T-cell (primary cell): ENCODE measurements at regions of chr3 and their contacts with region 1.

Region 1: DNA sequence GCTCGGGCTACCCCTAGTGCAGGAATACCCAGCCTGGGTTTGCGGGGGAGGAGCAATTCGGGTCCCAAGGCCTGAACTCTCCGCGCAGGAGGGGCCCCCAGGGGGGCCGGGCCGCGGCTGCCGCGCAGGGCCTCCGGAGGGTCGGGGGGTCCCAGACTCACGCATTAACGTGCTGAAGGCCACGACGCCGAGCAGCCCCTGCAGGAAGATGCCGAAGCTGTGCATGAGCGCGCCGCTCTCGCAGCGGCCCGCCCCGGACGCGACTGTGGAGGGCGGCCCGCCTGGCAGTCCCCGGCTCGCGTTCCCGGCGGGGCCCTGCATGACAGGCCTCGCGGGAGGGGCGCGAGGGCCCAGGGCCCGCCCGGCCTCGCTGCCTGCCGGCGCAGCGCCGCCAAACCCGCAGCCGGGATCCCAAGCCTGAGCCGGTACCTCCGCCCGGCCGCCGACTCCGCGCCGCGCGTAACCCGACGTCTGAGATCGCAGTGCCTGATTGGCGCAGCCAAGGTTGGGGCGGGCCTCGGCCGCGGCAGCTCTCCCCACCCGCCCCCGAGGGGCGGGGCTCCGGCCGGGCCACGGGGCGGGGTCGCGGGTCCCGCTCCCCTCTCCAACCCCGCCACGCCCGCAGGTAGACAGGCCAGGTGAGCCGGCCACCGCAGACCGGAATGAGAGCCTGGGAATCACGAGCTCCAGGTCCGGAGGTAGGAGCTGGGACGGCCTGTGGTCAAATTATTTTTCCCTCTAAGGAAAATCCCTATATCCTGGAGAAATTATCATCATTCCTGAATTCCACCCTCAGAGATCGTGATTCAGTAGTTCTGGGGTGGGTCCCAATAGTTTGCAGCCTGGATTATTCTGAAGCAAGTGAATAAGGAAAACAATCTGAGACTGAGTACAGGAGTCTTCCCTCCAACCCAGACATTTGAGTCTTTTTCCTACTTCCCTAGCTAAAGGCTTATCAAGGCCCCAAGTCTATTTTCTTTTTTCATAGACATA is at the start of gene STIMATE:
- DNase-seq: peak; percentile 71 to 93 (median 83)
- ATAC-seq: peak; percentile 95 to 97 (median 96)
- H3K4me3 ChIP-seq: peak within 1 kb of the TSS; percentile 61 to 78
- H3K4me3 Mint-ChIP-seq: peak within 1 kb of the TSS; percentile 88 to 92 (median 91)
- H3K27ac ChIP-seq: peak within 1 kb of the TSS; percentile 52
- H3K27ac Mint-ChIP-seq: peak within 1 kb of the TSS; percentile 61 to 90
- H3K4me1 ChIP-seq: peaks cover 8 to 40% of the 10 kb centered on the region in 2 experiments
- H3K4me1 Mint-ChIP-seq: peaks cover 40 to 51% (median 49%) of the 10 kb centered on the region in 3 donors
- H3K27me3 ChIP-seq: no peaks in the 10 kb centered on the region
- H3K27me3 Mint-ChIP-seq: no peaks in the 10 kb centered on the region
- total RNA-seq, gene STIMATE: 37.3 to 61.8 (median 52.9) TPM

Region 2: DNA sequence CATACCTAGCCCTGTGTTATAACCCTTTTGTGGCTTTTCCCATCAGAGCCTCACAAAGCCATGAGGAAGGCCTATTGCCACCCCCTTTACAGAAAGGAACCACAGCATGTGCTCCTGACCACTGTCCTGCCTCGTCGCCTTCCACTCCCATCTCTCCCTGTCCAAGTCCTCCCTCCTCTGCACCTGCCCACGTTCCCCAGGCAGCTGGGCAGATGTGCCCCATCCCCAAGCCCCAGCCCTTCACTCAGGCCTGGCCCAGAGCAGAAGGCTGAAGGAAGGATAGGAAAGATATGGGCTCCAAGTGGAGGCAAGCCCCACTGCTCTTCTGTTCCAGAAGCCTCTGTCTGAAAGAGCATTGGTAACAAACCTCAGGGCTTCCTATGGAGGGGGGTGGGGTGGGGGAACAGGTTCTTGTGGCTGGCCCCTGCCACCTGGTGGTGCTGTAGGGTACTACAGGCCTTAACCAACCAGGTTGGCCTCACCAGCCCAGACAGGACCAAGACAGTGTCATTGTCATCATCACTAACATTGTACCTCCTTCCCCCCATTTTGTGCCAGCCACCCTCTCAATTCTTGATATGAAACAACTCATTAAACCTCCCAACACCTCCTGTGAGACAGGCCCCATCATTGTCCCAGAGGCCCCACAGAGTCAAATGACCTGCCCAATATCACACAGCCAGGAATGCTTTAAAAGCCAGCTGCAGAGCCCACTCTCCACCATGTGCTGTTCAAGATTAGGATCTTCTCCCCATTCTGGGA is 753.2 kb before region 1 on chr3:
- CTCF ChIA-PET with region 1: no interaction called
- POLR2A ChIA-PET with region 1: interaction called in 1 of 2 experiments, 14 read pairs
- DNase-seq: peak; percentile 72 to 93 (median 86)
- ATAC-seq: peak; percentile 93 to 98 (median 96)
- H3K4me3 ChIP-seq: no peak overlapping the region
- H3K4me3 Mint-ChIP-seq: no peak overlapping the region
- H3K27ac ChIP-seq: no peak overlapping the region
- H3K27ac Mint-ChIP-seq: peak overlapping the region in 1 of 2 donors; percentile 31
- H3K4me1 ChIP-seq: peaks cover 0 to 9% of the 10 kb centered on the region in 2 experiments
- H3K4me1 Mint-ChIP-seq: peaks cover 6 to 15% (median 9%) of the 10 kb centered on the region in 3 donors
- H3K27me3 ChIP-seq: no peaks in the 10 kb centered on the region
- H3K27me3 Mint-ChIP-seq: no peaks in the 10 kb centered on the region

Region 3: DNA sequence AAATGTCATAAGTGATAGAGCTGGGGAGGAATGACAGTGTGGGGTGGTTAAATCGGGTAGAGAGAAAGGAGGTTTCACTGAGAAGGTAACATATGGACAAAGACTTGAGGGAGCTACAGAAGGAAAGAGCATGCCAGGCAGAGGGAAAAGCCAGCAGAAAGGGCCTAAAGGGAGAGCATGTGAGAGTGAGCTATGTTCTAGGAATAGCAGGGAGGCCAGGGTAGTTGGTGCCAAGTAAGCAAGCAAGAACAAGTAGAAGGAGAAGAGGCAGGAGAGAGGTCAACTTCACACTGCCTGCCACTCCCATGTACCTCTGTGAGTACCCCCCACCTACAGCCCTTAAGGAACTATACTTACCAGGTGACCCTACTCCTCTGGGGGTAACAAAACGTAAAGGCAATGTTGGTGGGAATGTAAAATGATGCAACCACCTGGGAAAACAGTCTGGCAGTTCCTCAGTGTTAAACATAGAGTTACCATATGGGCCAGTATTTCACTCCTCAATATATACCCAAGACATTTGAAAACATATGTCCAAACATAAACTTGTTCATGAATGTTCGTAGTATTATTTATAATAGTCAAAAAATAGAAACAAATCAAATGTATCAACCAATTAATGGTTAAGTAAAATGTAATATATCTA is 80.8 kb after region 1 on chr3:
- CTCF ChIA-PET with region 1: no interaction called
- POLR2A ChIA-PET with region 1: interaction called in 1 of 2 experiments, 12 read pairs
- DNase-seq: no peak
- ATAC-seq: no peak
- H3K4me3 ChIP-seq: no peak overlapping the region
- H3K4me3 Mint-ChIP-seq: no peak overlapping the region
- H3K27ac ChIP-seq: no peak overlapping the region
- H3K27ac Mint-ChIP-seq: peak overlapping the region; percentile 18 to 24
- H3K4me1 ChIP-seq: peaks cover 3 to 7% of the 10 kb centered on the region in 2 experiments
- H3K4me1 Mint-ChIP-seq: peaks cover 42 to 48% (median 43%) of the 10 kb centered on the region in 3 donors
- H3K27me3 ChIP-seq: no peaks in the 10 kb centered on the region
- H3K27me3 Mint-ChIP-seq: no peaks in the 10 kb centered on the region